ENCODE measurements at regions of chr15 and their contacts with region 1.

Region 1: DNA sequence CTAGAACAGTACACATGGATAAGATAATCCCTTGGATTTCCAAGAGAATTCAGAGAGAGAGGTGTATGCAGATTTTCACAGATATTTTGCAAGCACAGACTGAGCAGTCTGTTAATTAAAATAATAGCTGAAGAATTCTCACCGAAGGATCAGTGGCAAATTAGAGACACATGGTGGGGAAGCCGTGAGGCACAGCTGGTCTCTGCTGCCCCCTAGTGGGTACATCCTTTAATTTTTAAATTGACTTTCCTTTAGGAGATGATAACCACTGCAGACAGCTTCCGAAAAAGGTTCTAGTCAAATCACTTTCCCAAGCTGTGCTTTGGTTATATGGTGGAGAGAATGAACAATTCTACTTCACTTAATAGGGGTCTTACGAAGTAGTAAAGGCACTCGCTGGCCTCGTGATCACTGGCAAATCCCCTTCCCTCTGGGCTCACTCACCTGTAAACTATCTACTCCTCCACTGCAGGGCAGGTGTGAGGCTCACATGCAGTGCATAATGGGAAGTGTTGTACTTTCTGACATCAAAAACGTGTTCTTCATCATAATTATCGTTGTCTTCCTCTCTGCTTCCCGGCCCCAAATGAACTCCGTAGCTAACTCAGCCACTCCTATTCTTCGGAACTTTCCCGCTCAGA is 19.5 kb downstream of the MESD start:
- DNase-seq: peak; percentile 76
- ATAC-seq: peak; percentile 74
- H3K4me3 Mint-ChIP-seq: no peak overlapping the region
- H3K27ac Mint-ChIP-seq: no peak overlapping the region
- H3K4me1 Mint-ChIP-seq: peaks cover 4% of the 10 kb centered on the region
- H3K27me3 Mint-ChIP-seq: no peaks in the 10 kb centered on the region

Region 2: DNA sequence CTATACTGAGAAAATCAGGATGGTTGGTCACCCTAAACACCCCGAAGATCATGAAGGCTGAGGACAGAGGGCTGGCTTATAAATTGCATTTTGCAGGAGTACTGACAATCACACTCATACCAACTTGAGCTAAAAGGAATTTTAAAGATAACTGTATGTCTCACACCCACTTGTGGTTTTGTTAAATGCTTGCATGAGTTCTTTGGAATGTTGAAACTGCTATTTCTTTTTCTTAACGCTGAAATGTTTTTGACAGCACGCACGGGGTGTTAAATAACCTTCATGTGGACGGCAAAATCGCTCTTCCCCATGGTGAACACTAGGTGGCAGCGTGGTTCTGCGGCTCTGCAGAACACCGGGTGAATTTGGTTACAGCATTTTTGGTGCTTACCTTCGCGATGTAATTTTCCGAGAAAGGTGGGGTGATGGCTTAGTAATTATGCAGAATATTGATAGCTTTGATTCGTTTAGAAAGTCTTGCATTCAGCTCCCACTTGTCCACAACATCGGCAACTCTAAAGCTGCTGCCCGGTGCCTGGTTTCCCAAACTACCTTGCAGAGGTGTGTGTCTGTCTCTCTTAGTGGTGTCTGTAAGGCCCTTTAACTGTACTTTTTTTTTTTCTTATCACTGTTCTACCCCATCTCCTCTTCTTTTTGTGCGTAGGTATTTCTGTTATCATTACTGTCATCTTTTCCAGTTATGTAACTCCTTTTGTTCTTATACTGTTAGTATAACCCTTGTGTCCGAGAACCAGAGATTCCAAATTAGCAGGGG is 514.3 kb before region 1 on chr15:
- CTCF ChIA-PET with region 1: interaction called, 23 read pairs
- POLR2A ChIA-PET with region 1: no interaction called
- intact Hi-C with region 1: loop called (anchors 1 kb)
- DNase-seq: peak; percentile 74
- ATAC-seq: peak; percentile 73
- H3K4me3 Mint-ChIP-seq: no peak overlapping the region
- H3K27ac Mint-ChIP-seq: no peak overlapping the region
- H3K4me1 Mint-ChIP-seq: no peaks in the 10 kb centered on the region
- H3K27me3 Mint-ChIP-seq: peaks cover 9% of the 10 kb centered on the region

Region 3: DNA sequence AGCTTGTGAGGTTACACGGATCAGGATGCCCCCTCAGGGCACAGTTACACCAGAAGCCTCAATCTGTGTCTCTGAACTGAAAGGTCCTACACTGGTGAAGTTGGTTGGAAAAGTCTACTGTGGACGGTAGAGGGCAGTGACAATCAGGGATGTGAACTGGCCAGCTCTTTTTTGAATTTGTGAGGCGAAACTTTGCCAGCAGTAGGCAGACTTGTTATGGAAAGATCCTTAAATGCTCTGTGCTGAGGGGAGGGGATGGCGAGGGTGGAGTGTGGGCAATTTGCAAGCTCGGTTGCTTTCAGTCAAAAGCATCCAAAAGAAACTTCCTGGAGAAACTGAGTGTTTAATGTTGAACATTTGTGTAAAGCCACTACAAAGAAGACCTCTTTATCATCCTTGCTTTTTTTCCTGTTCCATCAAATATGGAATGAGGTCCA is 402.4 kb before region 1 on chr15:
- CTCF ChIA-PET with region 1: interaction called, 4 read pairs
- POLR2A ChIA-PET with region 1: no interaction called
- intact Hi-C with region 1: loop called (anchors 1 to 2 kb)
- DNase-seq: peak; percentile 39
- ATAC-seq: peak; percentile 57
- H3K4me3 Mint-ChIP-seq: no peak overlapping the region
- H3K27ac Mint-ChIP-seq: no peak overlapping the region
- H3K4me1 Mint-ChIP-seq: peaks cover 9% of the 10 kb centered on the region
- H3K27me3 Mint-ChIP-seq: peaks cover 7% of the 10 kb centered on the region

Region 4: GRCh38 chr15:80804965-80805495 is 165.1 kb before region 1 on chr15:
- CTCF ChIA-PET with region 1: interaction called, 10 read pairs
- POLR2A ChIA-PET with region 1: no interaction called
- intact Hi-C with region 1: no loop called
- DNase-seq: peak; percentile 42
- ATAC-seq: peak; percentile 49
- H3K4me3 Mint-ChIP-seq: no peak overlapping the region
- H3K27ac Mint-ChIP-seq: peak overlapping the region; percentile 79
- H3K4me1 Mint-ChIP-seq: peaks cover 29% of the 10 kb centered on the region
- H3K27me3 Mint-ChIP-seq: peaks cover 2% of the 10 kb centered on the region

Region 5: DNA sequence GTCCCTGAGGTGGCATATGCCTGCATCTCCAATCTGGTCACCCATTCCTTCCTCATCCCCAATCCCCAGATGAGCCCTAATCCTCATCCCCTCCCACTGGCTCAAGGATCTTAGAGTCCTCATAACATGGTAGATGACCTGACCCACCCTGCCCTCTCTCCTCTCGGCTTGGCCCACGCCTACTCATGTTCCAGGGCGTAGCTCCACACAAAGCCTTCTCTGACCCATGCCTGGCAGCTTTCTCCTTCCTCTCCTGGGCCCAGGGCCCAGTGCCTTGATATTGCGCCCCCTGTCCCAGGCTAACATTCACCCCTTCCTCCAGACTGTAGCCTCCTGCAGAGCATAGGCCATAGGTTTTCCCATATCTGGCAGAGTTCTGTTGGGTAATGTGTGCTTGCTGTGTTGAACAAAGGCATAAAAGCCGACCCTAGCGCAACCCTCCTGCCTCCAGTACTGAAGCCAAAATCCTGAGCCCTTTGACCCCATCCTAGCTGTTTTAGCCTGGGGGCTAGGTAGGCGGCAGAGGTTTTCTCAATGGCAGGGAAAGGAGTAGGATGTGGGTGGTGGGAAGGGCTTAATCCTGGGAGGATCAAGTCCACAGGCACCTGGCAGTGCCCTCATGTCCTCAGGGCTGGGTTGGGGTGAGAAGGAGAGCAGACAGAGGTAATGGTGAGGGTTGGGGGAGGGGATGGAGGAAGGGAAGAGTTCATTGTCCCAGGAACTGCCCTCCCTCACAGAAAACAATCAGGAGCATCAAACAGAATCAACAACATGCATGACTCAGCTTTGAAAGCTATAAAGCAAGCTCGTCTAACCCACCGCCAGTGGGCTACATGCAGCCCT is 16.0 kb before region 1 on chr15:
- CTCF ChIA-PET with region 1: interaction called, 15 read pairs
- POLR2A ChIA-PET with region 1: no interaction called
- intact Hi-C with region 1: no loop called
- DNase-seq: no peak
- ATAC-seq: no peak
- H3K4me3 Mint-ChIP-seq: no peak overlapping the region
- H3K27ac Mint-ChIP-seq: no peak overlapping the region
- H3K4me1 Mint-ChIP-seq: peaks cover 24% of the 10 kb centered on the region
- H3K27me3 Mint-ChIP-seq: no peaks in the 10 kb centered on the region